ENCODE measurements at regions of chr5 and their contacts with region 1.

Region 1: DNA sequence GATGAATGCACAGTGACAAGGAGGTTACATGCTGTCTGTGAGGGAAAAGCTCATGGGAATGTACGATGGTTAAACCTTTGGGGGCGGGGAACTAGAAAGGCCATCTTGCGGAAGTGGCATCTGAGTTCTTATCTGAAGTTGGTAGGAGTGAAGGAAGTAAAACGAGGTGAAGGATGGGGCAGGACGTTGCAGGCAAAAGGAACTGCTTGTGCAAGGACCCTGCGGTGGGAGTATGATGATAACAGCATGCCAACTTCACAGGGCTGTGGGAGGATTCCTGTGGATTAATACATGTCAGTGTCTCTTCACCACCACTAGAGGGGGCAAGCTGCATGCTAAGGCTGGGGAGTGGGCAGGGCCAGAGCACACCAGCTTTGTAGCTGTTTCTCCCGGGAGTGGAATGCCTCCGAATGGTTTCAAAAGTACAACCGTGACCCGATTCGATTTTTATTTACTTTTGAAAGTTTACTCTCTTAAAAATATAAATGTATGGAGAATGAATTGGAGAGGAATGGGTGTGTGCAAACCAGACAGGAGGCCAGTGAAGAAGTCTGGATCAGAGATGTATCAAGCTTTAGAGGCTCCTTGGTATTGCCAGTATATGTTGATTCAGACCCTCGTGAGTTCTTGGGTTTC is 62.5 kb downstream of the CYFIP2 start:
- DNase-seq: peak; percentile 68
- ATAC-seq: peak; percentile 96
- H3K4me3 Mint-ChIP-seq: no peak overlapping the region
- H3K27ac Mint-ChIP-seq: peak overlapping the region; percentile 77
- H3K4me1 Mint-ChIP-seq: peaks cover 25% of the 10 kb centered on the region
- H3K27me3 Mint-ChIP-seq: no peaks in the 10 kb centered on the region

Region 2: GRCh38 chr5:157303667-157304327 is 24.6 kb before region 1 on chr5:
- CTCF ChIA-PET with region 1: interaction called, 21 read pairs
- POLR2A ChIA-PET with region 1: no interaction called
- DNase-seq: peak; percentile 71
- ATAC-seq: peak; percentile 46
- H3K4me3 Mint-ChIP-seq: peak overlapping the region; percentile 34
- H3K27ac Mint-ChIP-seq: peak overlapping the region; percentile 88
- H3K4me1 Mint-ChIP-seq: peaks cover 61% of the 10 kb centered on the region
- H3K27me3 Mint-ChIP-seq: no peaks in the 10 kb centered on the region

Region 3: DNA sequence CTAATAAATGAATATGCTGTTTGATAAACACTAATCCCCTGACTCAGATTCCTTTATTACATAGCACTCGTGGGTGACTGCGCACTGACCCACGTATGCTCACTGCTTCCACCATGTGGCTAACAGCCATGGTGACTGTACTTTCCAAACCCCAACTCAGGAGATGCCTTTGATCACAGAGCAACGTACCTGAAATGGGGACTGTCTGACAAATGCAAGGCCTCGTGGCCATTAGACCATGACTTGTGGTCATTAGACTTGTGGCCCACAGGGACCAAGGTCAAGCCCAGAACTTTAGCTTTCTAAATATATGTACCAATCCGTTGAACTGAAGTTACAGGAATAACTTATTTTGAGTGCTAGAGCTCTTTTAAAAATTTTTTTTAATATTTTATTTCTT is 15.9 kb before region 1 on chr5:
- CTCF ChIA-PET with region 1: interaction called, 78 read pairs
- POLR2A ChIA-PET with region 1: no interaction called
- DNase-seq: peak; percentile 74
- ATAC-seq: peak; percentile 92
- H3K4me3 Mint-ChIP-seq: no peak overlapping the region
- H3K27ac Mint-ChIP-seq: peak overlapping the region; percentile 63
- H3K4me1 Mint-ChIP-seq: peaks cover 32% of the 10 kb centered on the region
- H3K27me3 Mint-ChIP-seq: no peaks in the 10 kb centered on the region

Region 4: DNA sequence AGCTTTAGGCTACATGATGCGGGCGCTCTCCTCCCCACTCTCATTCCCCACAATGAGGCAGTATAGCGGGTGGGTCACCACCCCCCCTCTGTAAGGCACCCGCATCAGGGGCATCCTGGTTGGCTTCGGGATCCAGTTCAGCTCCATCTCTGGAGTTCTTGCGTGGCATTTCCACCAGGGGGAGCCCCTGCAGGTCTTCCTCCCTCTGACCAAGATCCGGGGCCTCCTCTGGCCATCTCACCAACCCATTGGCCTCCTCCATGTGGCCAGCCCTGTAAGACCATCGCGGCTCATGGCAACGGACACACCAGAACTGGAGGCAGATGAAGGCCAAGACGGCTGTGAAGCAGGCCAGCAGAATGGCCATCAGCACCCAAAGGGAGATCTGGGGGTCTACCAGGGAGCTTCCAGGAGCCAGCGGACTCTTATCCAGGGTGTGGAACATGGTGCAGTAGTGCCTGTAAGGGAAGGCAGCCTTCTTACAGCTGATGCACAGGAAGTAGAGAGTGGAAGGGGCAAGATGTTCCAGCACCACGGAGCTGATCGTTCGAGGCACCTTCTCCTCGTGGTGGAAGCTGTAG is 14.5 kb after region 1 on chr5:
- CTCF ChIA-PET with region 1: interaction called, 54 read pairs
- POLR2A ChIA-PET with region 1: no interaction called
- DNase-seq: peak; percentile 48
- ATAC-seq: peak; percentile 60
- H3K4me3 Mint-ChIP-seq: no peak overlapping the region
- H3K27ac Mint-ChIP-seq: no peak overlapping the region
- H3K4me1 Mint-ChIP-seq: peaks cover 5% of the 10 kb centered on the region
- H3K27me3 Mint-ChIP-seq: no peaks in the 10 kb centered on the region

Region 5: GRCh38 chr5:157431544-157432200 is 103.3 kb after region 1 on chr5:
- CTCF ChIA-PET with region 1: no interaction called
- POLR2A ChIA-PET with region 1: no interaction called
- DNase-seq: peak; percentile 58
- ATAC-seq: peak; percentile 91
- H3K4me3 Mint-ChIP-seq: no peak overlapping the region
- H3K27ac Mint-ChIP-seq: no peak overlapping the region
- H3K4me1 Mint-ChIP-seq: peaks cover 3% of the 10 kb centered on the region
- H3K27me3 Mint-ChIP-seq: peaks cover 42% of the 10 kb centered on the region

Measured in activated CD8-positive, alpha-beta T cell treated with anti-CD3 and anti-CD28 coated beads, Interleukin-2, amount 10 ng/mL, durations not matched to agents 7 days and 5 days (primary cell).